MCF 10A (cell line): ENCODE measurements at regions of chr7 and their contacts with region 1.

Region 1: DNA sequence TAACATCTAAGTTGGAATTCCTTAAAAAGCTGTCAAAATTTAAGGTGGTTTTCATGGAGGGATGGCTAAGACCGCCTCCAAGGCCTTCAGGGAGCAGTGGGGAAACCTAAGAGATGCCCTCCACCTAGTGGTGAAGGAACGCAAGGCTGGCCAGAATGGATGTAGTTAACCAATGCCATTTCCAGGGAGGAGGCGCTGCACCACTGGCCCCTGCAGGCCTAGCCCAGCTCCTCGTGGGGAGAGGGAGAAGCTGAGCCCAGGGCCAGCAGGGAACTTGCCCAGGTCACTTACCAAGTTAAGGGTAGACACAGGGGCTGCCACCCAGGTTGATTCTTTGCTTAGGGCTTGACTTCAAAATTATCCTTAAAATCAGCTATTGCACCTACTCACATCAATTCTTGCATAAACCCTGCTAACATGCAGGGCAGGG is 32.0 kb downstream of the FIGNL1 start:
- DNase-seq: peak; percentile 88
- H3K4me3 Mint-ChIP-seq: no peak overlapping the region
- H3K27ac Mint-ChIP-seq: no peak overlapping the region
- H3K4me1 Mint-ChIP-seq: no peaks in the 10 kb centered on the region
- H3K27me3 Mint-ChIP-seq: no peaks in the 10 kb centered on the region
- CTCF ChIP-seq: peak; percentile 75

Region 2: GRCh38 chr7:50092579-50093491 is 325.3 kb before region 1 on chr7 and contains the start of gene ZPBP:
- CTCF ChIA-PET with region 1: interaction called, 6 read pairs
- POLR2A ChIA-PET with region 1: no interaction called
- intact Hi-C with region 1: loop called (anchors 1 kb)
- DNase-seq: peak; percentile 52
- H3K4me3 Mint-ChIP-seq: no peak within 1 kb of the TSS
- H3K27ac Mint-ChIP-seq: no peak within 1 kb of the TSS
- H3K4me1 Mint-ChIP-seq: no peaks in the 10 kb centered on the region
- H3K27me3 Mint-ChIP-seq: peaks cover 60% of the 10 kb centered on the region
- CTCF ChIP-seq: peak; percentile 61
- total RNA-seq, gene ZPBP: not detected in 2 replicates

Region 3: GRCh38 chr7:50147951-50148808 is 269.9 kb before region 1 on chr7:
- CTCF ChIA-PET with region 1: interaction called, 19 read pairs
- POLR2A ChIA-PET with region 1: interaction called, 3 read pairs
- intact Hi-C with region 1: no loop called
- DNase-seq: no peak
- H3K4me3 Mint-ChIP-seq: no peak overlapping the region
- H3K27ac Mint-ChIP-seq: no peak overlapping the region
- H3K4me1 Mint-ChIP-seq: no peaks in the 10 kb centered on the region
- H3K27me3 Mint-ChIP-seq: peaks cover 45% of the 10 kb centered on the region
- CTCF ChIP-seq: no peak

Region 4: DNA sequence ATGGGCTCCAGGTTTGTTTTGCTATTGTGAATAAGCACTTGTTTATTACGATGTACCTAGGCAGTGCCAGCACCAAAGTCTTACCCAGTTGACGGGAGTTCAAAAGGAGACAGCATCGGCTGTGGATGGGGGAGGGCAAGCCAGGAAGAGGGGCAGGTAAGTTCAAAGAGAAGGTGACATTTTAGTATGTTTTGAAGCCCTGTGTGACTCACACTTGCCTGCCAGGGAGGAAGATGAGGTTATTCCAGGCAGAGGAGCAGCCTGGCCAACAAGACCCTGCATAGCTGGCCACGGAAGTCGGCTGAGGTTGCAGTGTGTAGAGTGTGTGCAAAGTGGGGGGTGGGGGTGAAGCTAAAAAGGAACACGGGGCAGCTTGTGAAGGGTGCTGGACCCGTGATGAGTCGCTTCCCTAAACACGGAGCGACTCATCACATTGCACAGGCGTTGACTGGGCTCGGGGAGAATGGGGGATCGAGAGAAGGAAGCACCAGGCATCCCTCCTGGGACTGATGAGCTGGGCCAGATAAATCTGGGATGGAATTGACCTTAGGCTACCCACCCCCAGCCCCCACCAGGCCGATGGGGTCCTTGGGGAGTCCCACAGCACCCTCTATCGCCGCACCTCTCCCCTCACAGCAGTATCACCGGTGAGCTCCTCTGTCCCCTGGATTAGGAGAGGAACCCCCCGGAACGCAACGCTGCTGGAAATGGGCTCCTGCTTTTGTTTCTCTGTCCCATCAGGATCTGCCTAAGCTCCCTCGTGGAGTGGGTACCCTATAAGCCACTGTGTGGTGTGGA is 211.4 kb before region 1 on chr7:
- CTCF ChIA-PET with region 1: interaction called, 214 read pairs
- POLR2A ChIA-PET with region 1: no interaction called
- intact Hi-C with region 1: loop called (anchors 1 kb)
- DNase-seq: no peak
- H3K4me3 Mint-ChIP-seq: no peak overlapping the region
- H3K27ac Mint-ChIP-seq: no peak overlapping the region
- H3K4me1 Mint-ChIP-seq: no peaks in the 10 kb centered on the region
- H3K27me3 Mint-ChIP-seq: peaks cover 56% of the 10 kb centered on the region
- CTCF ChIP-seq: no peak

Region 5: GRCh38 chr7:50229964-50230363 is 188.1 kb before region 1 on chr7:
- CTCF ChIA-PET with region 1: interaction called, 10 read pairs
- POLR2A ChIA-PET with region 1: no interaction called
- intact Hi-C with region 1: no loop called
- DNase-seq: peak; percentile 30
- H3K4me3 Mint-ChIP-seq: no peak overlapping the region
- H3K27ac Mint-ChIP-seq: no peak overlapping the region
- H3K4me1 Mint-ChIP-seq: no peaks in the 10 kb centered on the region
- H3K27me3 Mint-ChIP-seq: peaks cover 34% of the 10 kb centered on the region
- CTCF ChIP-seq: peak; percentile 52

Region 6: GRCh38 chr7:50436133-50436806 is 18.2 kb after region 1 on chr7:
- CTCF ChIA-PET with region 1: interaction called, 44 read pairs
- POLR2A ChIA-PET with region 1: no interaction called
- intact Hi-C with region 1: no loop called
- DNase-seq: peak; percentile 76
- H3K4me3 Mint-ChIP-seq: no peak overlapping the region
- H3K27ac Mint-ChIP-seq: no peak overlapping the region
- H3K4me1 Mint-ChIP-seq: peaks cover 13% of the 10 kb centered on the region
- H3K27me3 Mint-ChIP-seq: no peaks in the 10 kb centered on the region
- CTCF ChIP-seq: no peak